Pancreas (tissue), 10 donors: ENCODE measurements at regions of chr2 and their contacts with region 1.

Region 1: GRCh38 chr2:200811336-200812121 is at the start of gene BZW1:
- DNase-seq: peak; percentile 95 to 98 (median 96)
- ATAC-seq: peak; percentile 91 to 94 (median 92)
- H3K4me3 ChIP-seq: peak within 1 kb of the TSS; percentile 65 to 99 (median 98)
- H3K27ac ChIP-seq: peak within 1 kb of the TSS; percentile 96 to 99 (median 98)
- H3K4me1 ChIP-seq: peaks cover 10 to 22% (median 19%) of the 10 kb centered on the region in 3 donors
- H3K27me3 ChIP-seq: no peaks in the 10 kb centered on the region
- CTCF ChIP-seq: no peak
- total RNA-seq, gene BZW1: 35.6 to 85.7 (median 60.1) TPM

Region 2: DNA sequence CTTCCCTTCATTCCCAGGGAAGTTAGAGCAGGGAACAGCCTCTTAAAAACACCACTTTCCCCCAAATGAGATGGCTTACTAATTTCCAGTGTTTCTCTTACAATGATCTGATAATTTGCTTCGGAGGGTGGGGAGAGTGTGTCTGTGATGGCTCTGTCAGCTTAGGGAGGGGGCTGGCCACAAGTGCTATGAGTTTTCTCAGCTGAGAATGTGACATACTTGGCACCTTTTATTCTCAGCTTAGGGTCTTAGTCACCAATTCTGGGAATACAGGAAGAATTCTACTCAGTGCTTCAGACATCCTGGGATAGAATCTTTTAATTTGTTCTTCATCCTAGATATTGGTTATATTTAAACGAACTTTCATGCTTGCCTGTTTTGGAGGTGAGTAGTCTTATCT is 161.3 kb before region 1 on chr2:
- intact Hi-C with region 1: no loop called
- DNase-seq: no peak
- ATAC-seq: no peak
- H3K4me3 ChIP-seq: no peak overlapping the region
- H3K27ac ChIP-seq: peak overlapping the region in 1 of 4 donors; percentile 13
- H3K4me1 ChIP-seq: peaks cover 0 to 16% (median 10%) of the 10 kb centered on the region in 3 donors
- H3K27me3 ChIP-seq: no peaks in the 10 kb centered on the region
- CTCF ChIP-seq: no peak

Region 3: DNA sequence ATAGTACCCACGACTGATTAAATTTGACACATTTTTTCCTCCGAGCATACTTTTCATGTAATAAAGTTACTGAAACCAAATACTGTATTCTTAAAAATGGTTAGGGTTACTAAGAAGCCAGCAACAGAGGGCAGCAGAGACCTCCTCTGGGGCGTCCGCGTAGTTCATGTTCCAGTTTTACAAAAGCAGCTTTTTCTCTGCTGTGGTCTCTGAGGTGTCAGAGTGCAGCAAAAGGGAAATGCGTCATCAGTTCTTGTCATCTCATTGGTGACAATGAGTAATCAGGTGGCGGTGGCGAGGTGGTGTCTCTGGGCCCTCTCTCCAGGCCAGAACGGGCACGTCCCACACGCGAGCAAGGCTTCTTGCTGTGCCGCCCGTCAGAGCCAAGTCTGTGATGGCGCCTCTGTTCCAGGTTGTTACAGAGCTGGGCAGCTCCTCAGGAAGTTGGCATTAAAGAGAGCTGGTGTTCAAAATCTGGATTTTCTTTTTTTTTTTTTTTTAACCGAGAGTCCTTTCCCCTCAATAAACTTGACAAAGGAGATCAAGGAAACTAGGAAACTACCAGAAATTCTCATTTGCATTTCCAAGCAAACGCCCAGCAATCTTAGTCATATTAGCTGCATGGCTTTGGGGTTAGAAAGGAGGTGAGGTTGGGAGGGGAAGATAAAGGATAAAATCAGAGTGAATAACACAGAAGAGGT is 98.4 kb before region 1 on chr2:
- intact Hi-C with region 1: loop called in 1 of 3 experiments (anchors 5 kb)
- DNase-seq: peak; percentile 75 to 87 (median 80)
- ATAC-seq: peak; percentile 96 to 99 (median 99)
- H3K4me3 ChIP-seq: peak overlapping the region in 3 of 4 donors; percentile 9 to 28 (median 27)
- H3K27ac ChIP-seq: peak overlapping the region in 3 of 4 donors; percentile 51 to 64 (median 57)
- H3K4me1 ChIP-seq: peaks cover 0 to 4% (median 3%) of the 10 kb centered on the region in 3 donors
- H3K27me3 ChIP-seq: no peaks in the 10 kb centered on the region
- CTCF ChIP-seq: peak; percentile 22 to 73 (median 64)